Activated CD8-positive, alpha-beta T cell treated with anti-CD3 and anti-CD28 coated beads, Interleukin-2, amount 10 ng/mL, durations not matched to agents 7 days and 5 days (primary cell): ENCODE measurements at regions of chr5 and their contacts with region 1.

Region 1: GRCh38 chr5:91272858-91273257 is 110.3 kb downstream of the ARRDC3 start:
- DNase-seq: peak; percentile 31
- ATAC-seq: peak; percentile 74
- H3K4me3 Mint-ChIP-seq: no peak overlapping the region
- H3K27ac Mint-ChIP-seq: no peak overlapping the region
- H3K4me1 Mint-ChIP-seq: peaks cover 26% of the 10 kb centered on the region
- H3K27me3 Mint-ChIP-seq: peaks cover 2% of the 10 kb centered on the region

Region 2: GRCh38 chr5:91311697-91312501 is 39.0 kb after region 1 on chr5:
- CTCF ChIA-PET with region 1: no interaction called
- POLR2A ChIA-PET with region 1: interaction called, 10 read pairs
- DNase-seq: peak; percentile 84
- ATAC-seq: peak; percentile 85
- H3K4me3 Mint-ChIP-seq: peak overlapping the region; percentile 61
- H3K27ac Mint-ChIP-seq: peak overlapping the region; percentile 82
- H3K4me1 Mint-ChIP-seq: peaks cover 57% of the 10 kb centered on the region
- H3K27me3 Mint-ChIP-seq: no peaks in the 10 kb centered on the region

Region 3: GRCh38 chr5:91352831-91353695 is 80.2 kb after region 1 on chr5:
- CTCF ChIA-PET with region 1: no interaction called
- POLR2A ChIA-PET with region 1: no interaction called
- DNase-seq: no peak
- ATAC-seq: no peak
- H3K4me3 Mint-ChIP-seq: no peak overlapping the region
- H3K27ac Mint-ChIP-seq: no peak overlapping the region
- H3K4me1 Mint-ChIP-seq: no peaks in the 10 kb centered on the region
- H3K27me3 Mint-ChIP-seq: peaks cover 12% of the 10 kb centered on the region